ENCODE measurements at regions of chr7 and their contacts with region 1.

Region 1: DNA sequence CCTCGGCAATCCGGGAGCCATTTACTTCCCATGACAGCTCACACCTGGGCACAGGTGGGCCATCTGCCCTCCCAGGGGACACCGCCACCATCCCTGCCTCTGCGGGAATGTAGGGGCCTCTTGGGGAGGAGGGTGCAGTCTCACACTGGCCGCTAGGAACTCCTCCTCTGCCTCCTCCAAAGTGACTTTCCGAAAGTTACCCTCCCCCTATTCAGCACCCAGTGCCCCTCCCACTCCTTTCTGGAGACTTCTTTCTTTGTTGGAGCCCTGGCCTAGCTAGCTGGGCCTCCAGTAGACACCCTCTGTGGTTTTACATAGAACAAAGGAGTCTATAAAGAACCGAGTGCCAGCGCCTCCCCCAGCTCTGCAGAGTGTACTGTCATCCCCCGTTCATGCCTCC is 45.8 kb upstream of the MNX1 start:
- DNase-seq: peak in 3 of 4 experiments; percentile 49 to 71 (median 61)
- ATAC-seq: peak; percentile 90
- H3K4me3 ChIP-seq: no peak overlapping the region
- H3K27ac ChIP-seq: no peak overlapping the region
- H3K4me1 ChIP-seq: no peaks in the 10 kb centered on the region
- H3K27me3 ChIP-seq: peaks cover 69 to 75% of the 10 kb centered on the region in 2 experiments
- CTCF ChIP-seq: peak; percentile 13 to 43 (median 35); a peak in 5 of 6 replicates
- EP300 ChIP-seq: no peak
- POLR2A ChIP-seq: no peak
- RAD21 ChIP-seq: no peak

Region 2: GRCh38 chr7:156668181-156668624 is 388.0 kb before region 1 on chr7:
- CTCF ChIA-PET with region 1: no interaction called
- POLR2A ChIA-PET with region 1: no interaction called
- in situ Hi-C with region 1: no loop called
- intact Hi-C with region 1: no loop called
- DNase-seq: no peak
- ATAC-seq: peak; percentile 12; the same call in 2 of the 3 replicates
- H3K4me3 ChIP-seq: no peak overlapping the region
- H3K27ac ChIP-seq: no peak overlapping the region
- H3K4me1 ChIP-seq: peaks cover 0 to 10% of the 10 kb centered on the region in 2 experiments; a peak in 2 of 5 replicates
- H3K27me3 ChIP-seq: no peaks in the 10 kb centered on the region
- CTCF ChIP-seq: no peak
- EP300 ChIP-seq: no peak
- POLR2A ChIP-seq: no peak
- RAD21 ChIP-seq: no peak

Region 3: GRCh38 chr7:157309990-157310668 is 253.9 kb after region 1 on chr7:
- CTCF ChIA-PET with region 1: no interaction called
- POLR2A ChIA-PET with region 1: no interaction called
- in situ Hi-C with region 1: no loop called
- intact Hi-C with region 1: no loop called
- DNase-seq: no peak
- ATAC-seq: no peak
- H3K4me3 ChIP-seq: no peak overlapping the region
- H3K27ac ChIP-seq: no peak overlapping the region
- H3K4me1 ChIP-seq: peaks cover 8 to 16% of the 10 kb centered on the region in 2 experiments; a peak in 4 of 5 replicates
- H3K27me3 ChIP-seq: no peaks in the 10 kb centered on the region; a peak in 1 of 5 replicates
- CTCF ChIP-seq: no peak
- EP300 ChIP-seq: no peak
- POLR2A ChIP-seq: no peak
- RAD21 ChIP-seq: no peak

Region 4: GRCh38 chr7:157827045-157827862 is 771.0 kb after region 1 on chr7:
- CTCF ChIA-PET with region 1: no interaction called
- POLR2A ChIA-PET with region 1: no interaction called
- in situ Hi-C with region 1: loop called (anchors 10 kb)
- intact Hi-C with region 1: no loop called
- DNase-seq: no peak
- ATAC-seq: no peak
- H3K4me3 ChIP-seq: no peak overlapping the region
- H3K27ac ChIP-seq: no peak overlapping the region
- H3K4me1 ChIP-seq: no peaks in the 10 kb centered on the region
- H3K27me3 ChIP-seq: peaks cover 26 to 81% of the 10 kb centered on the region in 2 experiments
- CTCF ChIP-seq: no peak
- EP300 ChIP-seq: no peak
- POLR2A ChIP-seq: no peak
- RAD21 ChIP-seq: no peak

Measured in K562 (cell line).